Left ventricle myocardium inferior (tissue), 1 donor: ENCODE measurements at regions of chr1 and their contacts with region 1.

Region 1: GRCh38 chr1:51189421-51190073 is 46.5 kb upstream of the RNF11 start:
- DNase-seq: no peak
- H3K4me3 ChIP-seq: no peak overlapping the region
- H3K27ac ChIP-seq: no peak overlapping the region
- H3K4me1 ChIP-seq: no peaks in the 10 kb centered on the region
- H3K27me3 ChIP-seq: no peaks in the 10 kb centered on the region
- CTCF ChIP-seq: peak; percentile 90

Region 2: DNA sequence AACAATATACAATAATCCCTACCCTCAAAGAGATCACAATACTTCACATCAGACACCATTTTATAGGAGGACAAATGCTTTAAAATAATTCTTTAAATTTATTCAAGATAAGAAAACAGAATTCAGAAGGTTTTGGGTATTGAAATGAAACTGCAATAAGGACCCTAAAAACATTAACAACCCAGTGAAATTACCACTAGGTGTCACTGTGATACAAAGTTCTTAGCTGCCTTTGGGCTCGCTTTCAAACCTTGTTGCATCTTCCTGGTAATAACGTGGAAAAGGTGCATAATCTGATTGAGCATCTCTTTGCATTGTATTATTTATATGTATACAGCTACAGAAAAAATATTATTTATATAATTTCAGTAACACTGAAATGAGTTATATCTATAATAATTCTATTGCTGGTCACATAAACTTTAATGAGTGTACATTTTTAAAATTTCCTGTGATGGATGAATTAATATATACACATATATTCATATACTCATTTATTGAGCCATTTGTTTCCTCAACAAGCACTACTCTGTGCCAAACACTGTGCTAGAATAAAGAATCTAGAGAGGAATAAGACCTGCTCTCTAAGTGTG is 414.7 kb before region 1 on chr1:
- intact Hi-C with region 1: loop called (anchors 10 kb)
- DNase-seq: no peak
- H3K4me3 ChIP-seq: no peak overlapping the region
- H3K27ac ChIP-seq: no peak overlapping the region
- H3K4me1 ChIP-seq: no peaks in the 10 kb centered on the region
- H3K27me3 ChIP-seq: no peaks in the 10 kb centered on the region
- CTCF ChIP-seq: peak; percentile 81